IMR-90 (cell line): ENCODE measurements at regions of chr9 and their contacts with region 1.

Region 1: DNA sequence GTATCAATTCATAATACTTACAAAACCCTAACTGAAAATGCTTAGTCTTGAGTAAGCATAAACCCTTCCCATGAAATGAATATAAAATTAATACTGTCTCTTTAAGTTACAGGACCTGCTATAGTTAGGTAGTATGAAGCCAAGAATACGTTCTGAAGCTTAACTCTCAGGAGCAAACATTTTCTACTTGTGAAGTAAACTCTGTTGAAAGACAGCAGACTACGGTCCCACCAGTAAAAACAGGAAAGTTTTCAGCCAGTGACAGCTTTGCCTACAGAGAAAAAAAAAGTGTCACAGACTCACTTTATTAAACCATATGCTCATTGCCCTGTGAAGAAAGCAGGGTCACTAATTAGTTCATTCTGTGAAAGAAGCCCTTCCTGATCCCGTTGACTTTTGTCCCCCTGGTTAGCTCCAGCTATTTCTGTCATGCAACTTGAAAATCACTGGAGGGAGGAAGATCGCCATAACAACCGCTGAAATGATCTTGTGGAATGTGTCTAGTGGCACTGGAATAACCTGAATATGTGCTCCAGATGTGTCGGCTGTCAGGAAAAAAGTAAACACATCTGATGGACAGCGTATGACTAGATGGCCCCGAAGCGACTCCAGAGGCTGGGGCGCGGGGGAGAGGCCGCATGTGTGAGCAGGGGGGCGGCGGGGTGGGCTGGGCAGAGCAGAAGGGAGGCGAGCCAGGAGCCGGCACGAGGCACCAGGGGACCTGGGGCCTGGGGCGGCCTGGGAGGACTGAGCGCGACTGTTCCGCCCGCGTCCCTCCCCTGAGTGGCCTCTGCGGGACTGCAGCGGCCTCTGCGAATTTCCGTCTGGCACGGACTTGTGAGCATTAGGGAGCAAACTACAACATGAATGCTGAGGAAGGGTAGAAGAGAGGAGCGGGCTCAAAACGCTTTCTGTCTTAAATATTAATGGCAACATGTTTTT is 41.9 kb downstream of the BNC2 start:
- DNase-seq: peak; percentile 78
- ATAC-seq: peak; percentile 21
- H3K4me3 ChIP-seq: peak overlapping the region; percentile 22; the same call in 1 of the 2 replicates
- H3K27ac ChIP-seq: peak overlapping the region; percentile 93
- H3K4me1 ChIP-seq: peaks cover 22% of the 10 kb centered on the region
- H3K27me3 ChIP-seq: no peaks in the 10 kb centered on the region
- CTCF ChIP-seq: no peak
- POLR2A ChIP-seq: no peak
- RAD21 ChIP-seq: no peak

Region 2: DNA sequence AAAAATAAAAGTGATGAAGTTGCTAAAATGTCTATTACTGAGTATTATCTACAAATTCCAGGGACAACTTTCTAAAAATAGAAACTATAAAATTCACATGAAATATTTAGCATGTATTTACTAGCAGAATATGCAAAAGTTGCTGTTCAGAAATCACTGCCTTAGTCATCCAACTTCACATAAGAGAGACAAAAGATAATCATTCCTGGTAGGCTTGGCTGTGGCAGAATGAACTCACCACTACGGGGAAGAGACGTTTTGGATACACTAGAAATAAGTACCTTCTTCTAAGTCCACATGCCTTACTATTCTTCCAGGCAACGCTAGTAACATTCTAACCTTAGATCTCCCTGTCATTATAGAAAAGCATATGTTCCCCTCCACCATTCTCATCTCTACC is 230.3 kb before region 1 on chr9:
- CTCF ChIA-PET with region 1: no interaction called
- POLR2A ChIA-PET with region 1: no interaction called
- dilution Hi-C with region 1: no loop called
- in situ Hi-C with region 1: no loop called
- intact Hi-C with region 1: loop called (anchors 10 kb)
- DNase-seq: peak; percentile 56
- ATAC-seq: peak; percentile 44; the same call in 1 of the 2 replicates
- H3K4me3 ChIP-seq: no peak overlapping the region
- H3K27ac ChIP-seq: no peak overlapping the region
- H3K4me1 ChIP-seq: peaks cover 3% of the 10 kb centered on the region; the same call in 1 of the 2 replicates
- H3K27me3 ChIP-seq: no peaks in the 10 kb centered on the region
- CTCF ChIP-seq: no peak
- POLR2A ChIP-seq: no peak
- RAD21 ChIP-seq: no peak

Region 3: DNA sequence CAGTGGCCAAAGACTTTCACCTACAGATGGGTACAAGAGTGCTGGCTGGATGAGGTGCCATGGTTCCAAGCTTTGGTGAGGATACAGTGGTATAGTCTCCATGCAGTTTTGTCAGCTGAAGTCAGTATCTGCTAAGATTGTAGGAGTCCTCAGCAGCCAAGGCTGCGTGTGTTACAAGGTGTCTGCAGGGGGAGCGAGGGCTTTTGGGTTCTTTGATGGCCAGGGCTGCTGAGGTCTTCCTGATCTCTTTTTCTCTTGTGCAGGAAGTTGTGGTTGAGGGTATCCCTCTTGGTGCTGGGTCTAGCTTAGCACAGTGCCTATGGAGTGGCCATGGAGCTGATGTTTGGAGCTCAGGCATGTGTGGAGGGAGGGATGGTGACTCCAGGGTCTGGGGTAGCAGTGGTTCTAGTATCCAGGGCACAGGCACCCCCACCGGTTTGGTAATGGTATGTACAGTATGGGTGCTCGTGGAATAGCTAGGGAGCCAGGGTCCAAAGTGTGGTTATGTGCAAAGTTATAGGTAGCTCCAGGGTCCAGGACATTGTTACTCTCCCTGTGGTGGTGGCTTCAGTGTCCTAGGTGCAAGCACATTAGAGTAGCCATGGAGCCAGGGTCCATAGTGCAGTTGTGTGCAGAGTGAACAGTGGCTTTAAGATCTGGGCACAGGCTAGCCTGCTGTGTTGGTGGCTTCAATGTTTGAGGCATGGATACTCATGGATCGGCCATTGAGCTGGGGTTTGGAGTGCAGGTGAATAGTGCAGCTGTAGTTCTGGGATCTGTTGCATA is 342.9 kb after region 1 on chr9:
- CTCF ChIA-PET with region 1: no interaction called
- POLR2A ChIA-PET with region 1: no interaction called
- dilution Hi-C with region 1: no loop called
- in situ Hi-C with region 1: no loop called
- intact Hi-C with region 1: no loop called
- DNase-seq: no peak
- ATAC-seq: no peak
- H3K4me3 ChIP-seq: no peak overlapping the region
- H3K27ac ChIP-seq: no peak overlapping the region
- H3K4me1 ChIP-seq: no peaks in the 10 kb centered on the region
- H3K27me3 ChIP-seq: no peaks in the 10 kb centered on the region
- CTCF ChIP-seq: no peak
- POLR2A ChIP-seq: no peak
- RAD21 ChIP-seq: no peak